Endothelial cell of umbilical vein (primary cell): ENCODE measurements at regions of chr16 and their contacts with region 1.

Region 1: GRCh38 chr16:74431516-74431915 is 10.2 kb upstream of the CLEC18B start:
- DNase-seq: no peak
- H3K4me3 ChIP-seq: no peak overlapping the region
- H3K27ac ChIP-seq: no peak overlapping the region
- H3K4me1 ChIP-seq: no peaks in the 10 kb centered on the region
- H3K27me3 ChIP-seq: no peaks in the 10 kb centered on the region
- CTCF ChIP-seq: no peak
- POLR2A ChIP-seq: no peak

Region 2: DNA sequence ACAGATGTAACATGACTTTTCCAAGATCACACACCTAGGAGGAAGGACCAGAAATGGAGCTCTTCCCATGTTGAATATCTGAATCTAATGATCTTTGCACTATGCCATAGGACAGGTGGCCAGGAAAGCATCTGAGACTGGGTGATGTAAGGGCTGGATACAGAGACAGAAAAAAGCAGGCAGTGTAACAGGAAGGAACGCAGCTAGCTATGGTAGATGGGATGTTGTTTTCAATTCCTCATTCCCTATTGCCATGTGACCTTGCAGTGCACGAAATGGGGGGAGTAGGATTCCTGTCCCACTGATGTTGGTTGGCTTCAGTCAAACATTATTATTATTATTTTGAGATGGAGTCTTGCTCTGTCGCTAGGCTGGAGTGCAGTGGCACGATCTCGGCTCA is 59.1 kb before region 1 on chr16:
- CTCF ChIA-PET with region 1: interaction called, 3 read pairs
- POLR2A ChIA-PET with region 1: no interaction called
- dilution Hi-C with region 1: no loop called
- intact Hi-C with region 1: loop called (anchors 2 kb)
- DNase-seq: no peak
- H3K4me3 ChIP-seq: no peak overlapping the region
- H3K27ac ChIP-seq: no peak overlapping the region
- H3K4me1 ChIP-seq: peaks cover 3% of the 10 kb centered on the region
- H3K27me3 ChIP-seq: peaks cover 2% of the 10 kb centered on the region in 2 experiments
- CTCF ChIP-seq: no peak
- POLR2A ChIP-seq: no peak